Activated CD8-positive, alpha-beta T cell treated with anti-CD3 and anti-CD28 coated beads, Interleukin-2, amount 10 ng/mL, durations not matched to agents 7 days and 5 days (primary cell): ENCODE measurements at regions of chr10 and their contacts with region 1.

Region 1: DNA sequence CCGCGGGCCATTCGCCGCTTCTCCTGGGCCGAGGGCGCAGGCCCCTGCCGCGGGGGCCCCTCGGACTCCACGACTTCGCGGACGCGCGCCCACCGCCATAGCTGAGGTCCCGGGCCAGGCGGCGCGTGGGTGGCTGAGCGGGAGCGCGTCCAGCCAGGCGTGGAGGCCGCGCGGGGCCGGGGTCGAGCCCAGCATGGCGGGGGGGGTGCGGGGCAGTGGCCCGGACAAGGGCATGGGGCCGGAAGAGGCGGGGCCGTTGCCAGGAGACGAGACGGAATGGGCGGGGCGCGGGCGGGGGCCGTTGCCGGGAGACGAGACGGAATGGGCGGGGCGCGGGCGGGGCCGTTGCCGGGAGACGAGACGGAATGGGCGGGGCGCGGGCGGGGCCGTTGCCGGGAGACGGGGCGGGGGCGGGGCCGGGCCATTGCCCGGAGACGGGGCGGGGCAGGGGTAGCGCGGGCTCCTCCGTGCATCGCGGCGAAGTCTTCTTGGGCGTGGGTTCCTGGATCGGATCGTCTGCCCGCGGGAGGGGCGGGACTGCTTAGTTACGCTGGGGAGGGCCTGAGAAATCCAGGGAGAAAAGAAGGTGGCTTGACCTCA is 14.8 kb downstream of the ADAM8 start:
- DNase-seq: peak; percentile 90
- ATAC-seq: peak; percentile 49
- H3K4me3 Mint-ChIP-seq: peak overlapping the region; percentile 74
- H3K27ac Mint-ChIP-seq: peak overlapping the region; percentile 60
- H3K4me1 Mint-ChIP-seq: peaks cover 82% of the 10 kb centered on the region
- H3K27me3 Mint-ChIP-seq: no peaks in the 10 kb centered on the region

Region 2: DNA sequence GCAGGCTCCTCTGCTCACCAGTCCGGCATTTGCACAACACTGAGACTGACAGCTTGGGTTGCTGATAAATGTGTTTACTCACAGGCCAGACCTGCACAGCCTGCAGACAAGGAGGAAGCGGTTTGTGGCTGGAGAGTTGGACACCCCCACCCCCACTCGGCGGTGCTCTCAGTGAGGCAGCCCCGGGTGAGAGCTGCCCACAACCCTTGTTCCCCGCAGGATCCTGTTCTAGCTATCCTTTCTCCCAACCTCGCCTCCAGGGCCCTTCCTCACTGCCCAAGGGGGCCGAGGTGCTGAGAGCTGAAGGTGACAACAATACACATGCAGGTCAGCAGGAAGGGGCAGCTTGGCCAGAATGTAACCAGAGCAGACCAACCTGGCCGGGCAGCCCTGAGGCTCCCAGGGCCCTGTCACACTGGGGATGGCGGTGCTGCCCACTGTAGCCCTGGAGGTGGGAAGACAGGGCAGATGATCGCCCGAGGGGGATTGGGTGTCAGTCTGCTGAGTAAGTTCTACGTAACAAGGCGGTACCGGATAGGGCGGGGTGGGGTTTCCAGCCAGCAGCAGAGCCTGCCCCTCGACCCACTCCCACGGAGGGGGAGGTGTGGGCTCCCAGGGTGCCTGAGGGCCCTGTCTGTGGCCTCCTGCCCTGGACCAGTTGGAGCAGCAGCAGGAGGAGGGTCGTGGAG is 16.9 kb after region 1 on chr10:
- CTCF ChIA-PET with region 1: interaction called, 17 read pairs
- POLR2A ChIA-PET with region 1: interaction called, 11 read pairs
- DNase-seq: peak; percentile 82
- ATAC-seq: peak; percentile 22
- H3K4me3 Mint-ChIP-seq: peak overlapping the region; percentile 76
- H3K27ac Mint-ChIP-seq: peak overlapping the region; percentile 92
- H3K4me1 Mint-ChIP-seq: peaks cover 49% of the 10 kb centered on the region
- H3K27me3 Mint-ChIP-seq: no peaks in the 10 kb centered on the region

Region 3: DNA sequence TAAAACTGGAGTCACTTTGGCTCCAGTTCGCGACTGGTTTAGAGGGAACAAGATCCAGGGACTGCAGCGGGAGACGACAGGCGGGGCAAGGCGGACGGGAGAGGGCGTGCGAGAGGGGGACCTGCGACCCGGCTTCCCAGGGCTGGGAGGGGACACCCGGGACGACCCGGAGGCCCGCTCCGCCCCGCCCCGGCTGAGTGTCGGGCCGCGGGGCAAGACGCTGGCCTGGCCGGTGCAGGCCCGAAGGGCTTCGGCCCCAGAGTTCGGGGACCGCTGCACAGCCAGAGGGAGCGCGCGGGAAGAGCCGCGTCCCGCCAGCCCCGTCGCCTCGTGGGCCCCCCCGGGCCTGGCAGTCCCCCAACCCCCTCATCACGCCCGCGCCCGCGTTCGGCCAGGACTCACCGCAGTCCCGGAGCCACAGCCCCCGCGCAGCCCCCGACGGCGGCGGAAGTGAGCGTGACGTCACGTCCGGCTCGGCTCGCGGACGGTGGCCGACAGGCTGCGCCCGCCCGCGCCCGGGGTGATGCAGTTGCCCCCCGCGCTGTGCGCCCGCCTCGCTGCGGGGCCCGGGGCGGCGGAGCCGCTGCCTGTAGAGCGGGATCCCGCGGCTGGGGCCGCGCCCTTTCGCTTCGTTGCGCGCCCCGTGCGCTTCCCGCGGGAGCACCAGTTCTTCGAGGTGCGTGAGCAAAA is 46.7 kb after region 1 on chr10 and contains the starts of genes TUBGCP2 and ZNF511:
- CTCF ChIA-PET with region 1: interaction called, 14 read pairs
- POLR2A ChIA-PET with region 1: interaction called, 3 read pairs
- DNase-seq: peak; percentile 89
- ATAC-seq: peak; percentile 73
- H3K4me3 Mint-ChIP-seq: peak within 1 kb of the TSS; percentile 95
- H3K27ac Mint-ChIP-seq: peak within 1 kb of the TSS; percentile 99
- H3K4me1 Mint-ChIP-seq: peaks cover 19% of the 10 kb centered on the region
- H3K27me3 Mint-ChIP-seq: no peaks in the 10 kb centered on the region
- total RNA-seq, gene TUBGCP2: 53.5 to 59.0 TPM
- total RNA-seq, gene ZNF511: 61.4 to 62.6 TPM